Activated CD4-positive, alpha-beta memory T cell treated with anti-CD3 and anti-CD28 coated beads, Interleukin-2, amount 10 ng/mL, durations not matched to agents 7 days and 5 days (primary cell): ENCODE measurements at regions of chr9 and their contacts with region 1.

Region 1: DNA sequence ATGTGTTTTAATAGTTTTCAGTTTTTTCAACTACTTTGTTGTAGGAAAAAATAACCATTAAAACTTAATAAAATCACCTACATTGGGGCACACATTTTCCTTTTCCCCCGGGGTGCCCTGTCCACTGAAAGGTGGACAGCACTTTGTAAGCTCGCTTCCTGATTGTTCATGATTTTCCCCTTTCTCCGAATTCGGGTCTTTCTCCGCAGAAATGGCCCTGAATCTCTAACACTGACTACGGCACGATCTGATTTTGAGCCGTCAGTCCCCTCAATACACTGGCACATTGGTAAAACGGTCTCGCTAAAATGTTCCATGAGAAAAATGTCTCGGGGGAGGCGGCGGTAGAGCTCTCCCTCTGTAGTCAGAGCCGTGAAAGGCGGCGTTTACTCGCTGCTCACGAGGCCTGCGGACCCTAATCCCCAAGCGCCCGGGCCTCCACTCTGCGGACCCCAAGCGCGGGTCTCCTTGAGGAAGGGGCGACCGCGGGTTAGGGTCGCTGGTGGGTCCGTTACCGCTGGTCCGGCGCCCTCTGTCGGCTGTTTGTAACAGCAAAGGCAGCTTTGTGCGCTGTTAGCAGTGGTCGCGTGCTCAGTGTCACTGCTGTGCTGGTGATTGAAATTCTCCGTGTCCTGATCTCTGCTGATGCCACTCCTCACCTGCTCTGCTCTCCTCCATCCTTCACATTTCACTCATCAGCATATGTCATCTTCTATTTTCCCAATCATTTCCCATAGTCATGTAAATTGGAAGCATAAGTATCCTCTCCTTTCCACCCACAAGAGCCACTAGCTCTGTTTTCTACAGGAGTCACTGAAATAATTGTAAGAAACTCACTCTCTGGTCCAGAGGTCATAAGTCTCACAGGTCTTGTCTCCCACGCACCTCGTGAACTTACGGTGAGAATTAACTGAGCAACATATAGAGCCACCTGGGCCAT is 10.8 kb upstream of the IFNA2 start:
- DNase-seq: peak; percentile 56
- H3K4me3 Mint-ChIP-seq: peak overlapping the region; percentile 45
- H3K27ac Mint-ChIP-seq: no peak overlapping the region
- H3K4me1 Mint-ChIP-seq: peaks cover 5% of the 10 kb centered on the region
- H3K27me3 Mint-ChIP-seq: peaks cover 57% of the 10 kb centered on the region

Region 2: GRCh38 chr9:20997503-20998076 is 398.5 kb before region 1 on chr9:
- CTCF ChIA-PET with region 1: no interaction called
- POLR2A ChIA-PET with region 1: no interaction called
- DNase-seq: no peak
- H3K4me3 Mint-ChIP-seq: no peak overlapping the region
- H3K27ac Mint-ChIP-seq: peak overlapping the region; percentile 16
- H3K4me1 Mint-ChIP-seq: peaks cover 35% of the 10 kb centered on the region
- H3K27me3 Mint-ChIP-seq: no peaks in the 10 kb centered on the region

Region 3: GRCh38 chr9:21317956-21318923 is 77.8 kb before region 1 on chr9:
- CTCF ChIA-PET with region 1: interaction called, 45 read pairs
- POLR2A ChIA-PET with region 1: no interaction called
- DNase-seq: peak; percentile 38
- H3K4me3 Mint-ChIP-seq: no peak overlapping the region
- H3K27ac Mint-ChIP-seq: no peak overlapping the region
- H3K4me1 Mint-ChIP-seq: no peaks in the 10 kb centered on the region
- H3K27me3 Mint-ChIP-seq: peaks cover 10% of the 10 kb centered on the region

Region 4: GRCh38 chr9:21326526-21327139 is 69.4 kb before region 1 on chr9:
- CTCF ChIA-PET with region 1: interaction called, 45 read pairs
- POLR2A ChIA-PET with region 1: interaction called, 3 read pairs
- DNase-seq: no peak
- H3K4me3 Mint-ChIP-seq: no peak overlapping the region
- H3K27ac Mint-ChIP-seq: no peak overlapping the region
- H3K4me1 Mint-ChIP-seq: peaks cover 27% of the 10 kb centered on the region
- H3K27me3 Mint-ChIP-seq: no peaks in the 10 kb centered on the region

Region 5: GRCh38 chr9:21334701-21335632 is 61.1 kb before region 1 on chr9 and contains the start of gene KLHL9:
- CTCF ChIA-PET with region 1: interaction called, 39 read pairs
- POLR2A ChIA-PET with region 1: interaction called, 4 read pairs
- DNase-seq: peak; percentile 86
- H3K4me3 Mint-ChIP-seq: peak within 1 kb of the TSS; percentile 85
- H3K27ac Mint-ChIP-seq: peak within 1 kb of the TSS; percentile 85
- H3K4me1 Mint-ChIP-seq: peaks cover 47% of the 10 kb centered on the region
- H3K27me3 Mint-ChIP-seq: peaks cover 14% of the 10 kb centered on the region
- total RNA-seq, gene KLHL9: 17.0 to 18.0 TPM

Region 6: DNA sequence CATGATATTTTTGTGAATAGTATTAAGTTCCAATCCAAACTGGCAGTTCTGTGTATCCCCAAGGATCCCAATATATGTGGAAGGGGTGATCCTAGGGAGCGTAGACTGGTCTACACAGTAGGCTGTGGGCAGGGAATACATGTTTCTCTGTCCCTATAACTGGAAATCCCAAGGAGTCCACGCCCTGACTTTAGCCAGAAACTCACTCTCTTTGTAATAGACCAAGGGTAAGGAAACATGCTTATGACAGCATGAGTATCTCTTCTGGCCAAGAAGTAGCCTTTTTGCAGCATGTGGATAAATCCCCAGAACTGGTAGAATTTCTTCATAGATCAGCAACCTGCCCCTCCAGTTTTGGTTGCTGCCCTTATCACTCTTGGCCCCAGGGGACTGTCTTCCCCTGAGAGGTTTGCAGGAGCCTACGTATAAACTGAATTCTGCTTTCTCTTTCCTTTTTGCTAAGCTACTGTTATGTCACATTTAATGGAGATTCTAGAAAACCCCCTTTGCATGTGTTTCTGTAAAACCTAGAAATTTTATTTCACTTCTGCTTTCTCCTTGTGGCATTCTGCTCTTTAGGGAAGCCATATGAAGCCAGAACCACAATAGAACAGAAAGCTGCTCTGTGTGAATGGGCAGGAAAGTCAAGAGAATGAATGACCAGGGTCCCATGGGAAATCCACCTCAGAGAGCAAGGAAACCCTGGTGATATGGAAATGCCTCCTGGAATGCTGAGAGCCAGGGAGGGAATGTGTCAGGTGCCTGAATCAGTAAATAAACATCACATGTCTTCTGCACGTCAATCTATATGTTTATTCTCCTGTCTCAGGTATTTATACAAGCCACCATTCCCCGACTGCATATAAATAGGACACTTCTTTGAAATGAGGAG is 14.4 kb before region 1 on chr9:
- CTCF ChIA-PET with region 1: interaction called, 19 read pairs
- POLR2A ChIA-PET with region 1: interaction called, 4 read pairs
- DNase-seq: no peak
- H3K4me3 Mint-ChIP-seq: no peak overlapping the region
- H3K27ac Mint-ChIP-seq: no peak overlapping the region
- H3K4me1 Mint-ChIP-seq: peaks cover 7% of the 10 kb centered on the region
- H3K27me3 Mint-ChIP-seq: peaks cover 53% of the 10 kb centered on the region

Region 7: DNA sequence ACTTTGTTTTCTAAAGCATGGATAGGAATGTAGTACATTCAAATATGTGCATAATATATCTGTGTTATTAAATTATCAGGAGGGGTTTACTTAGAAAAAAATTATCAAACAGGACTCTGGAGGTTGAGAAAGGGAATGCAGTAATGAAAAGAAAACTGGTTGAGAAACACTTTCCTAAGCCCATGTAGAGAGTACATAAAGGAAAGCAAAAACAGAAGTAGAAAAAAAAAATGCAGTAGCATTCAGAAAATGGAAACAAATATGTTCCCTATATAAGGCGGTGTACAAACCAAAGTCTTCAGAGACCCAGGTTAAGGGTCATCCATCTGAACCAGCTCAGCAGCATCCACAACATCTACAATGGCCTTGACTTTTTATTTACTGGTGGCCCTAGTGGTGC is 12.8 kb after region 1 on chr9 and contains the start of gene IFNA8:
- CTCF ChIA-PET with region 1: interaction called, 22 read pairs
- POLR2A ChIA-PET with region 1: no interaction called
- DNase-seq: no peak
- H3K4me3 Mint-ChIP-seq: no peak within 1 kb of the TSS
- H3K27ac Mint-ChIP-seq: no peak within 1 kb of the TSS
- H3K4me1 Mint-ChIP-seq: no peaks in the 10 kb centered on the region
- H3K27me3 Mint-ChIP-seq: peaks cover 23% of the 10 kb centered on the region
- total RNA-seq, gene IFNA8: not detected

Region 8: GRCh38 chr9:21465859-21466518 is 69.9 kb after region 1 on chr9:
- CTCF ChIA-PET with region 1: no interaction called
- POLR2A ChIA-PET with region 1: no interaction called
- DNase-seq: no peak
- H3K4me3 Mint-ChIP-seq: no peak overlapping the region
- H3K27ac Mint-ChIP-seq: no peak overlapping the region
- H3K4me1 Mint-ChIP-seq: no peaks in the 10 kb centered on the region
- H3K27me3 Mint-ChIP-seq: peaks cover 24% of the 10 kb centered on the region